ENCODE measurements at regions of chr9 and their contacts with region 1.

Region 1: DNA sequence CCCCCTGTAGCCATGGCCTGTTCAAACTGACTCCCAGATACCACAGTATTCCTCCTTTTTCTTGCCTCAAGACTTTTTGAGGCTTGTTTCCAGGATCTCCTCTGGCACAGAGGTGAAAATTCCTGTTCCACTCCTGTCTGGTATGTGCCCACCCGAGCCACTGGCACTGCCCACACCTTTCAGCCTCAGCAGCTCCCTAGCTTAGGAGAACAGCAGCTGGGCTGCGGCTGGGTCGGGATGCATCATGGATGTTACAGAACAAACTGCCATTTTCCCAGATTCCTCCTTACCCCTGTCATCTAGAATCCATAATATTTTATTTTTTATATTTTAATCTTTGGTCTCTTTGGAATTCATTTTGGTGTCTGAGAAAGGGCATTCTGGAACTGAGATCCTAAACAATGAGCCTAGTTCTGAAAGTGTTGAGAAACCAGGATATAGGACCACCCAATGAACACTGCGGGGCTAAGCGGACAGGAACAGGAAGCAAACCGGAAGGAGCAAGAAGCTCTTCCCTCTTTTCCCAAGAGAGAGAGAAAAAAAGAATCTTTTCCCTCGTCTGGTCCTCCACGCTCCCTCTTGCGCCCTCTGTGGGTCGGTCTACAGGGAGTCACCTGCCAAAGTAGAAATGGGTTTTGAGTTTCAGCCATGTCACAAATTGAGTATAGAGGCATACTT is 12.5 kb downstream of the OR2S2 start:
- DNase-seq: peak; percentile 64
- ATAC-seq: peak; percentile 47
- H3K4me3 ChIP-seq: no peak overlapping the region
- H3K4me3 Mint-ChIP-seq: no peak overlapping the region
- H3K27ac ChIP-seq: no peak overlapping the region
- H3K27ac Mint-ChIP-seq: no peak overlapping the region
- H3K4me1 ChIP-seq: peaks cover 3 to 4% of the 10 kb centered on the region in 2 donors
- H3K4me1 Mint-ChIP-seq: no peaks in the 10 kb centered on the region
- H3K27me3 ChIP-seq: peaks cover 0 to 16% (median 13%) of the 10 kb centered on the region in 4 experiments
- H3K27me3 Mint-ChIP-seq: peaks cover 29% of the 10 kb centered on the region
- CTCF ChIP-seq: peak; percentile 74

Region 2: DNA sequence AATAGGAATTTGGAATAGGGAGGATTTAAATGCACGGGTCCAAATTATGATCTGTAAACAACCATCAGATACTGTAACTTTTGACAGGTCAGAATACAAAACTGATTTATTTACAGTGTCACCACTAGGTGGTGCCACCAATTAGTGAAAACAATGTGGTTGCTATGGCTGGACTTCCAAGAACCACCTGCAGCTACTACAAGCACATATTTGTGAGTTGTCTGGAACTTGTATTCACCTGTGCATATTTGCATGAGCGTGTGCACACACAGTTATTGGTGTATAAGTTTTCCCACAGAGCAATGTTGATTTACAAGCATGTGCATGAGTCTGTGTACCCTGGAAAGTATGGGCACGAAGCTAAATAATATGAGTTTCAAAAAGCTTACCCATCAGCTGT is 42.4 kb before region 1 on chr9:
- CTCF ChIA-PET with region 1: interaction called, 19 read pairs
- POLR2A ChIA-PET with region 1: no interaction called
- intact Hi-C with region 1: loop called (anchors 1 kb)
- DNase-seq: peak; percentile 66
- ATAC-seq: peak; percentile 51
- H3K4me3 ChIP-seq: no peak overlapping the region
- H3K4me3 Mint-ChIP-seq: no peak overlapping the region
- H3K27ac ChIP-seq: no peak overlapping the region
- H3K27ac Mint-ChIP-seq: no peak overlapping the region
- H3K4me1 ChIP-seq: no peaks in the 10 kb centered on the region
- H3K4me1 Mint-ChIP-seq: no peaks in the 10 kb centered on the region
- H3K27me3 ChIP-seq: peaks cover 0 to 10% (median 1%) of the 10 kb centered on the region in 4 experiments
- H3K27me3 Mint-ChIP-seq: peaks cover 35% of the 10 kb centered on the region
- CTCF ChIP-seq: peak; percentile 90

Region 3: GRCh38 chr9:35960039-35960655 is 14.7 kb after region 1 on chr9:
- CTCF ChIA-PET with region 1: interaction called, 21 read pairs
- POLR2A ChIA-PET with region 1: no interaction called
- intact Hi-C with region 1: no loop called
- DNase-seq: no peak
- ATAC-seq: no peak
- H3K4me3 ChIP-seq: no peak overlapping the region
- H3K4me3 Mint-ChIP-seq: no peak overlapping the region
- H3K27ac ChIP-seq: no peak overlapping the region
- H3K27ac Mint-ChIP-seq: no peak overlapping the region
- H3K4me1 ChIP-seq: no peaks in the 10 kb centered on the region
- H3K4me1 Mint-ChIP-seq: no peaks in the 10 kb centered on the region
- H3K27me3 ChIP-seq: peaks cover 0 to 7% (median 0%) of the 10 kb centered on the region in 4 experiments
- H3K27me3 Mint-ChIP-seq: peaks cover 30% of the 10 kb centered on the region
- CTCF ChIP-seq: no peak